Naive thymus-derived CD8-positive, alpha-beta T cell (primary cell): ENCODE measurements at regions of chr3 and their contacts with region 1.

Region 1: GRCh38 chr3:195271116-195271858 is at the start of gene XXYLT1:
- DNase-seq: peak; percentile 78 to 92 (median 89)
- ATAC-seq: peak; percentile 84 to 88
- H3K4me3 Mint-ChIP-seq: peak within 1 kb of the TSS; percentile 79 to 92 (median 90)
- H3K27ac Mint-ChIP-seq: peak within 1 kb of the TSS; percentile 66 to 91 (median 82)
- H3K4me1 Mint-ChIP-seq: peaks cover 16 to 34% (median 26%) of the 10 kb centered on the region in 4 donors
- H3K27me3 Mint-ChIP-seq: no peaks in the 10 kb centered on the region
- polyA plus RNA-seq, gene XXYLT1: 6.3 to 8.3 (median 7.2) TPM

Region 2: DNA sequence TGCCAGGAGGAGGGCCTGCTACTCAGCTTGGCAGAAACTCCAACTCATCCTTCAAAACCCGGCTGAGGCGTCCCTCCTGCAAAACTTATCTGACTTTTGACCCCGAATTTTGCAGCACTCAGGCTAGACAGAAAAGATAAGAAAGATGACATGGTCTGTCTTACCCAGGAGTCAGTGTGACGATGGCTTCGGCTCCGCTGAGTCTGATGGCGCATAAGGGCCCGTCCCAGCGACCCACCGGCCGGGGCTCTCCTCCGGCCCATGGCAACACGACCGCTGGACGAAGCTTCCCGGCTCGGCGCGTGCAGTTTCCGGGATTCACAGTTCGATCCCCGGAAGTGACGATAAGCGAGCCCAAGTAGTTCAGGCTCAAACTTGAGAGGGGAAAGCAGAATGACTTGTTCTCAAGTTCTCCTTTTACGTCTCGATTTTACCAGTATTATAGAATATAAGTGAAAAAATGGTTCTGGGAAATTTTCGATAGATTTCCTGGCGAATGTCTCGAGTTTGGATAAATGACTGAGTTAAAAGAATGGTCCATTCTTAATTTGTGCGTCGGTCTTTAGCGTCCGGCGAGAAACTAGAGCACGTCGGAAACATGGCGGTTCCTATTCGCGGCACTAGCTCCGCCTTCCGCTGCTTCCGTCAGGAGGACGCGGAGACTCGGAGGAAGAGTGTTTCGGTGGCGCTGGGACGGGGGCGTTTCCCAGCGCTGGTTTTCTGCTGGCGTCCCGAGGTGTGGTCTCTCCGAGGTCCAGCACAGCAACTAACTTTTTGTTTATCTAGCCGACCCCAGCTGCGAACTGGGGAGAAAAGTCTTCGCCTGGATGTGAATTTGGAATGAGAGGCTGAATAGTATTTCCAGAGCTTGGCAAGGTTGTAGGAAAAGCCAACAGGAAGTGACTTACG is 599.1 kb before region 1 on chr3 and contains the start of gene LSG1:
- POLR2A ChIA-PET with region 1: interaction called, 23 read pairs
- DNase-seq: peak; percentile 73 to 95 (median 86)
- ATAC-seq: peak; percentile 94 to 95
- H3K4me3 Mint-ChIP-seq: peak within 1 kb of the TSS; percentile 96 to 100 (median 98)
- H3K27ac Mint-ChIP-seq: peak within 1 kb of the TSS; percentile 95 to 100 (median 99)
- H3K4me1 Mint-ChIP-seq: peaks cover 18 to 42% (median 34%) of the 10 kb centered on the region in 4 donors
- H3K27me3 Mint-ChIP-seq: peaks cover 0 to 7% (median 0%) of the 10 kb centered on the region in 5 donors
- polyA plus RNA-seq, gene LSG1: 23.0 to 42.8 (median 24.8) TPM

Region 3: DNA sequence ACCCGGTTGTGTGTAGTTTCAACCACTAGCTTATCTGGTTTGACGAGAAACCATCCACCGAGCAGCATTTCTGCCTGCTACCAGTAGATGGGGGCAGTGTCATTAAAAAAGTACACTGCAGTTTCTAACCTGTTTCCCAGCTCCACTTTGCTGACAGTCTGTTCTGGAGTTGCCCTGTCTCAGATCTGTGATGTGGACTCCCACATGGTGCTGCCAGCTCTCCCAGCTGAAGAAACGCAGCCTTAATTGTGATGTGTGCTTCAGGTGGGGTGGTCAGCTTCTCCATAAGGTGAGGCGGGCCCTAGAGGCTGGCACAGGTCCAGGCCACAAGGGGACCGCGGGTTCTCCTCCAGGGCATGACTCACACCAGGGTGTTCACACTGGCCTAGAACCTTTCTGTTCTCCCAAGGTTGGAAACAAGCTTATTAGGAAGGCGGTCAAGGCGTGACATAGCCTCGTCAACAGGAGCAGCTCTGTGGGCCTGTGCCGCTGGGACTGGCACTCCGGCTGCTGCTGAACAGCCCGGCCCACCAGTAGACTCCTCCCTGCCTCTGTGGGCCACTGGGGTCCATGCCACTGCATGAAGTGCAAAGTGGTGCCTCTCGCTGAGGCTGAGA is 588.5 kb before region 1 on chr3:
- POLR2A ChIA-PET with region 1: interaction called, 24 read pairs
- DNase-seq: peak; percentile 20 to 82 (median 62)
- ATAC-seq: peak; percentile 74 to 78
- H3K4me3 Mint-ChIP-seq: peak overlapping the region in 1 of 10 donors; percentile 12
- H3K27ac Mint-ChIP-seq: peak overlapping the region in 5 of 10 donors; percentile 7 to 79 (median 16)
- H3K4me1 Mint-ChIP-seq: peaks cover 20 to 41% (median 35%) of the 10 kb centered on the region in 4 donors
- H3K27me3 Mint-ChIP-seq: peaks cover 0 to 24% (median 2%) of the 10 kb centered on the region in 5 donors

Region 4: GRCh38 chr3:195259475-195260279 is 11.6 kb before region 1 on chr3:
- POLR2A ChIA-PET with region 1: interaction called, 21 read pairs
- DNase-seq: peak; percentile 84 to 95 (median 92)
- ATAC-seq: peak; percentile 80 to 81
- H3K4me3 Mint-ChIP-seq: peak overlapping the region; percentile 56 to 76 (median 69)
- H3K27ac Mint-ChIP-seq: peak overlapping the region; percentile 70 to 95 (median 90)
- H3K4me1 Mint-ChIP-seq: peaks cover 20 to 39% (median 36%) of the 10 kb centered on the region in 4 donors
- H3K27me3 Mint-ChIP-seq: no peaks in the 10 kb centered on the region

Region 5: DNA sequence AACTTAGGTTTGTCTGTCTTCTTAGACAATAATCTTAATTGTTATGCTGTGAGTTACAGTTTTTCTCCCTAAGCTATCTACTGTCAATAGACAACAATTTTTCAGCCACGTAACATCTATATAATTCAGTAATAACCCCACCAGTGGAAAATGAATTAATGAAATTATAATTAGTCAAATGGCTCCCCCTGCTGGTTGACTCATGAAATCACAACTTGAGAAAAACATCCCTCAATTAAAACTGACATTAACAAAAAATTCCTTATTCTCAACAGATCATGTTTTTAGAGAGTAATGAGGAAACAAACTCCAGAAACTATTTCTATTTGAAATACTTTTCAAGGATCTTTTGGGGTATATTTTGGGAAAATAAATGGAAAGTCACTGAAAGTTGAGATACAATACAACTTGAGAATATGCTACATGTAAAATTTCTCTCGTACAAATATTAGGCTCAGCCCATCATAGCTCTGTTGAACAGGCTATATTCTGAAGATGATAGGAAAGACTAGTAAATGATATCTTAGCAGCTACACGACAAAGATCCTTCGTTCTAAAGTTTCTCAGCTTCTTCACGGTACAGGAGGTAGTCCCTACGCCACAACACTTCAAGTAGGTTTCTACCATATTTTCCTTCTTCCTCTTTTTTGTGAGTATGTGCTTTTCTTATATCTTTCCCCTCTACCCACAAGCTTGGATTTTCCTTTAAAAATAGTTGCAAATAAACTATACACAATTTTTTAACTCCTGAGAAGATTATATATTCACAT is 251.2 kb after region 1 on chr3:
- POLR2A ChIA-PET with region 1: interaction called, 10 read pairs
- DNase-seq: peak in 4 of 10 donors; percentile 28 to 59 (median 58)
- ATAC-seq: no peak
- H3K4me3 Mint-ChIP-seq: peak overlapping the region in 5 of 10 donors; percentile 5 to 11 (median 7)
- H3K27ac Mint-ChIP-seq: peak overlapping the region; percentile 32 to 84 (median 66)
- H3K4me1 Mint-ChIP-seq: peaks cover 13 to 56% (median 46%) of the 10 kb centered on the region in 4 donors
- H3K27me3 Mint-ChIP-seq: no peaks in the 10 kb centered on the region

Region 6: GRCh38 chr3:195542698-195543499 is 271.6 kb after region 1 on chr3 and contains the start of gene PPP1R2:
- POLR2A ChIA-PET with region 1: interaction called, 30 read pairs
- DNase-seq: peak; percentile 82 to 98 (median 93)
- ATAC-seq: peak; percentile 66 to 74
- H3K4me3 Mint-ChIP-seq: peak within 1 kb of the TSS; percentile 89 to 96 (median 94)
- H3K27ac Mint-ChIP-seq: peak within 1 kb of the TSS; percentile 95 to 100 (median 96)
- H3K4me1 Mint-ChIP-seq: peaks cover 46 to 78% (median 71%) of the 10 kb centered on the region in 4 donors
- H3K27me3 Mint-ChIP-seq: no peaks in the 10 kb centered on the region
- polyA plus RNA-seq, gene PPP1R2: 244 to 265 (median 245) TPM

Region 7: GRCh38 chr3:195549931-195550519 is 278.7 kb after region 1 on chr3:
- POLR2A ChIA-PET with region 1: interaction called, 17 read pairs
- DNase-seq: peak; percentile 65 to 95 (median 90)
- ATAC-seq: peak; percentile 84 to 87
- H3K4me3 Mint-ChIP-seq: peak overlapping the region; percentile 73 to 95 (median 86)
- H3K27ac Mint-ChIP-seq: peak overlapping the region; percentile 89 to 100 (median 98)
- H3K4me1 Mint-ChIP-seq: peaks cover 38 to 90% (median 87%) of the 10 kb centered on the region in 4 donors
- H3K27me3 Mint-ChIP-seq: no peaks in the 10 kb centered on the region